ENCODE measurements at regions of chr14 and their contacts with region 1.

Region 1: DNA sequence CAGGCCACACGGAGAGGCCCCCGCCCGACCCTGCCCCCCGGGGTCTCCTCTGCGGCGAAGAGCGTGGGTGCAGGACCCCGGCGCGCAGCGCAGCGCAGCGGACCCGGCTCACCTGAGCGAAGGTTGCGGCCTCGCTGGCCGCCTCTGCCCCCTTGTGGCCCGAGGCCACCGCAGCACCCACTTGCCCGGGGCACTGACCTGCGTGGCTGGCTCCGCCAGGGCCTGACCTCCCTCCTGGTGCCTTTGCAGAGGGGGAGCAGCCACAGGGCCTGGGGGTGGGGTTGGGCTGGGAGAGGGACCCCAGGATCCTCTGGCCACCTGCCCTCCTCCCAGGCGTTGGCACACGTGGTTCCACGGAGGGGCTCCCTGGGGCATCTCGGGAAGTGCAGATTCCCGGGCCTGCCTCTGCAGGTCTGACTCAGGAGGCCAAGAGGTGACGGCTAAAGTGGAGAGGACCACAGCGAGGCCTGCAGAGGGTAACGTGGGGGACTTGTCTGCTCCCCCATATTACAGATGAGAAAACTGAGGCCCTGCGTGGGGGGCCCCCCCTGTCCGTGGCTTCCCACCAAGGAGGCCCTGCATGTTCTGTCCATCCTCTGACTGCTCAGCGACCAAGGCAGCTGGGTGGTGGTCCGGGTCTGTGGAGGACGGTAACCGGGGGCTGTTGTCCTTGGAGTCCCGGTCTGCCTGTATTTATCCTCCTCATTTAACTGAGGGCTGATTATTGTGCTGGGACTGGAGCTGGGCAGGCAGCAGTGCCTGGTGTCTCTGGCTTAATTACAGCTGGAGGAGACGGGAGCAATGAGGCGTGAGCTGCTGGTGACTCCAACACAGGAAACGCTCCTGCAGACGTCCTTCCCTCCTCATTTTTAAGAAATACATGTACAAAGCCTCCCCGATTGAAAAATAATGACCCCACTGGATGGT is 67.9 kb upstream of the BEGAIN start:
- DNase-seq: no peak
- H3K4me3 ChIP-seq: no peak overlapping the region
- H3K27ac ChIP-seq: no peak overlapping the region
- H3K4me1 ChIP-seq: peaks cover 0 to 6% (median 2%) of the 10 kb centered on the region in 4 donors
- H3K27me3 ChIP-seq: peaks cover 19 to 35% (median 35%) of the 10 kb centered on the region in 3 donors
- CTCF ChIP-seq: peak in 3 of 4 experiments; percentile 42 to 51 (median 51)
- EP300 ChIP-seq: no peak
- POLR2A ChIP-seq: no peak

Region 2: GRCh38 chr14:100383727-100384158 is 271.3 kb before region 1 on chr14:
- intact Hi-C with region 1: loop called (anchors 5 kb)
- DNase-seq: peak; percentile 74
- H3K4me3 ChIP-seq: no peak overlapping the region
- H3K27ac ChIP-seq: no peak overlapping the region
- H3K4me1 ChIP-seq: peaks cover 0 to 20% (median 5%) of the 10 kb centered on the region in 4 donors
- H3K27me3 ChIP-seq: no peaks in the 10 kb centered on the region
- CTCF ChIP-seq: peak; percentile 15 to 80 (median 65)
- EP300 ChIP-seq: no peak
- POLR2A ChIP-seq: no peak